ENCODE measurements at regions of chr19 and their contacts with region 1.

Region 1: DNA sequence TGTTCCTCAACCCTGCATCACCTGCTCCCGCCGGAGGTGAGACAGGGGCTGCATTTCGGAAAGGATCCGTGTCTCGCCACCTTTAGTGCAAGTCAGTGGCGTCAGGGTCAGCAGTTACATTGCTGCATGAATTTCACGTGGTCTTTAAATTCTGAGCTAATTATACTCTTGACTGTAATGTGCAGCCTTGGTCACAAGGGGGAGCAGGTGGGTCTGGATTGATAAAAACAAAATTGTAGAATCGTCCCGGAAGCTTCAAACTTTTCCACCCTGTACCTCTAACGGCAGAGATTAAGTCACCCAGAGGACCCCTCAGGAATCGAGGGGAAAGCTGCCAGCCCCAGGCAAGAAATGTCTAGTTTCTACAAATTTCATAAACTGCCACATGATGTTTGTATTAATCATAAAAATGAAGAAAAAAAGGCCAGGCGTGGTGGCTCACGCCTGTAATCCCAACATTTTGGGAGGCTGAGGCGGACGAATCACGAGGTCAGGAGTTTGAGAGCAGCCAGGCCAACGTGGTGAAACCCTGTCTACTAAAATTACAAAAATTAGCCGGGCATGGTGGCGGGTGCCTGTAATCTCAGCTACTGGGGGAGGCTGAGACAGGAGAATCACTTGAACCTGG is 20.2 kb downstream of the BBC3 start:
- DNase-seq: no peak
- H3K4me3 ChIP-seq: no peak overlapping the region
- CTCF ChIP-seq: peak; percentile 70

Region 2: GRCh38 chr19:47143322-47144073 is 67.3 kb before region 1 on chr19:
- CTCF ChIA-PET with region 1: interaction called, 33 read pairs
- POLR2A ChIA-PET with region 1: no interaction called
- DNase-seq: no peak
- H3K4me3 ChIP-seq: no peak overlapping the region
- CTCF ChIP-seq: no peak

Region 3: GRCh38 chr19:47157431-47158321 is 53.1 kb before region 1 on chr19:
- CTCF ChIA-PET with region 1: interaction called, 39 read pairs
- POLR2A ChIA-PET with region 1: no interaction called
- DNase-seq: no peak
- H3K4me3 ChIP-seq: no peak overlapping the region
- CTCF ChIP-seq: no peak

Region 4: GRCh38 chr19:47176627-47177090 is 34.1 kb before region 1 on chr19:
- CTCF ChIA-PET with region 1: interaction called, 13 read pairs
- POLR2A ChIA-PET with region 1: no interaction called
- DNase-seq: peak; percentile 93
- H3K4me3 ChIP-seq: no peak overlapping the region
- CTCF ChIP-seq: no peak

Region 5: DNA sequence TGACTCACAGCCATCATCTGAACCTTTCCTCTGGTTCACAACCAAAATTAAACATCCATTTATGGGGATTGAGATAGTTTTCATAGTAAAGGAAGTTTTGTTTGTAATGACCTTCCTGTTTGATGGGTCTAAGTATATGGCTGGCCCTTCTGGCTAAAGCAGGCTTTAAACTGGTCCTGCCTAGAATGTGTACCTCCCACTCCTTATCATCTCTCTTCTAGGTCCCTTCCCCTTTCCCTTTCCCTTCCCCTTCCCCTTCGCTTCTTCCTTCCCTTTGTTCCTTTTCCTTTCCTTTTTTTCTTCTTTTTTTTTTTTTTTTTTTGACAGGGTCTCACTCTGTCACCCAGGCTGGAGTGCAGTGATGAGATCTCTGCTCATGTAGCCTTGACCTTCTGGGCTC is 15.4 kb before region 1 on chr19:
- CTCF ChIA-PET with region 1: interaction called, 105 read pairs
- POLR2A ChIA-PET with region 1: interaction called, 3 read pairs
- DNase-seq: no peak
- H3K4me3 ChIP-seq: no peak overlapping the region
- CTCF ChIP-seq: no peak

Region 6: GRCh38 chr19:47231215-47231984 is 20.6 kb after region 1 on chr19:
- CTCF ChIA-PET with region 1: interaction called, 145 read pairs
- POLR2A ChIA-PET with region 1: interaction called, 46 read pairs
- DNase-seq: no peak
- H3K4me3 ChIP-seq: peak overlapping the region; percentile 95
- CTCF ChIP-seq: no peak

Region 7: GRCh38 chr19:47284324-47284899 is 73.6 kb after region 1 on chr19:
- CTCF ChIA-PET with region 1: interaction called, 11 read pairs
- POLR2A ChIA-PET with region 1: no interaction called
- DNase-seq: no peak
- H3K4me3 ChIP-seq: no peak overlapping the region
- CTCF ChIP-seq: peak; percentile 67

Region 8: GRCh38 chr19:47414469-47414868 is 203.7 kb after region 1 on chr19:
- CTCF ChIA-PET with region 1: no interaction called
- POLR2A ChIA-PET with region 1: no interaction called
- DNase-seq: no peak
- H3K4me3 ChIP-seq: no peak overlapping the region
- CTCF ChIP-seq: peak; percentile 22

Measured in AG04449 (cell line).